Panc1 (cell line): ENCODE measurements at regions of chr20 and their contacts with region 1.

Region 1: DNA sequence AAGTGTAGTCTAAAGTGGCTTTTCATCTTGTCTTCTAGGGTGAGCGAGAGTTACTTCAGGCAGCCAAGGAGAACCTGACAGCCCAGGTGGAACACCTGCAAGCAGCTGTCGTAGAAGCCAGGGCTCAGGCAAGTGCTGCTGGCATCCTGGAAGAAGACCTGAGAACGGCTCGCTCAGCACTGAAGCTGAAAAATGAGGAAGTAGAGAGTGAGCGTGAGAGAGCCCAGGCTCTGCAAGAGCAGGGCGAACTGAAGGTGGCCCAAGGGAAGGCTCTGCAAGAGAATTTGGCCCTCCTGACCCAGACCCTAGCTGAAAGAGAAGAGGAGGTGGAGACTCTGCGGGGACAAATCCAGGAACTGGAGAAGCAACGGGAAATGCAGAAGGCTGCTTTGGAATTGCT is 27.1 kb downstream of the C20orf173 start:
- DNase-seq: no peak
- ATAC-seq: no peak
- H3K4me3 ChIP-seq: no peak overlapping the region
- H3K27ac ChIP-seq: no peak overlapping the region
- H3K4me1 ChIP-seq: no peaks in the 10 kb centered on the region
- H3K27me3 ChIP-seq: no peaks in the 10 kb centered on the region
- CTCF ChIP-seq: no peak

Region 2: GRCh38 chr20:35478804-35479472 is 23.4 kb before region 1 on chr20:
- CTCF ChIA-PET with region 1: no interaction called
- POLR2A ChIA-PET with region 1: interaction called, 11 read pairs
- in situ Hi-C with region 1: no loop called
- intact Hi-C with region 1: no loop called
- DNase-seq: no peak
- ATAC-seq: peak; percentile 49
- H3K4me3 ChIP-seq: no peak overlapping the region
- H3K27ac ChIP-seq: no peak overlapping the region
- H3K4me1 ChIP-seq: no peaks in the 10 kb centered on the region
- H3K27me3 ChIP-seq: no peaks in the 10 kb centered on the region
- CTCF ChIP-seq: no peak

Region 3: GRCh38 chr20:35821807-35822242 is 319.5 kb after region 1 on chr20:
- CTCF ChIA-PET with region 1: interaction called, 13 read pairs
- POLR2A ChIA-PET with region 1: no interaction called
- in situ Hi-C with region 1: no loop called
- intact Hi-C with region 1: no loop called
- DNase-seq: no peak
- ATAC-seq: peak; percentile 82
- H3K4me3 ChIP-seq: no peak overlapping the region
- H3K27ac ChIP-seq: no peak overlapping the region
- H3K4me1 ChIP-seq: peaks cover 12% of the 10 kb centered on the region
- H3K27me3 ChIP-seq: no peaks in the 10 kb centered on the region
- CTCF ChIP-seq: no peak